Activated CD4-positive, alpha-beta memory T cell treated with anti-CD3 and anti-CD28 coated beads, Interleukin-2, amount 10 ng/mL, durations not matched to agents 7 days and 5 days (primary cell): ENCODE measurements at regions of chr3 and their contacts with region 1.

Region 1: GRCh38 chr3:187616307-187616972 is 53.8 kb downstream of the SST start:
- DNase-seq: peak; percentile 57
- H3K4me3 Mint-ChIP-seq: no peak overlapping the region
- H3K27ac Mint-ChIP-seq: no peak overlapping the region
- H3K4me1 Mint-ChIP-seq: no peaks in the 10 kb centered on the region
- H3K27me3 Mint-ChIP-seq: peaks cover 20% of the 10 kb centered on the region

Region 2: GRCh38 chr3:187714404-187714979 is 98.1 kb after region 1 on chr3:
- CTCF ChIA-PET with region 1: interaction called, 26 read pairs
- POLR2A ChIA-PET with region 1: no interaction called
- DNase-seq: peak; percentile 79
- H3K4me3 Mint-ChIP-seq: no peak overlapping the region
- H3K27ac Mint-ChIP-seq: no peak overlapping the region
- H3K4me1 Mint-ChIP-seq: peaks cover 15% of the 10 kb centered on the region
- H3K27me3 Mint-ChIP-seq: peaks cover 6% of the 10 kb centered on the region